Posterior cingulate gyrus (tissue), 11 donors: ENCODE measurements at regions of chr13 and their contacts with region 1.

Region 1: GRCh38 chr13:48975856-48976575 is at the start of gene FNDC3A:
- DNase-seq: peak; percentile 60 to 95 (median 72)

Region 2: GRCh38 chr13:49110122-49110912 is 134.3 kb after region 1 on chr13:
- intact Hi-C with region 1: loop called (anchors 5 kb)
- DNase-seq: peak; percentile 53 to 96 (median 82)

Region 3: GRCh38 chr13:49247643-49248621 is 271.9 kb after region 1 on chr13 and contains the start of gene CDADC1:
- intact Hi-C with region 1: loop called (anchors 5 kb)
- DNase-seq: peak; percentile 94 to 99 (median 97)